Posterior vena cava (tissue), 2 donors: ENCODE measurements at regions of chr17 and their contacts with region 1.

Region 1: DNA sequence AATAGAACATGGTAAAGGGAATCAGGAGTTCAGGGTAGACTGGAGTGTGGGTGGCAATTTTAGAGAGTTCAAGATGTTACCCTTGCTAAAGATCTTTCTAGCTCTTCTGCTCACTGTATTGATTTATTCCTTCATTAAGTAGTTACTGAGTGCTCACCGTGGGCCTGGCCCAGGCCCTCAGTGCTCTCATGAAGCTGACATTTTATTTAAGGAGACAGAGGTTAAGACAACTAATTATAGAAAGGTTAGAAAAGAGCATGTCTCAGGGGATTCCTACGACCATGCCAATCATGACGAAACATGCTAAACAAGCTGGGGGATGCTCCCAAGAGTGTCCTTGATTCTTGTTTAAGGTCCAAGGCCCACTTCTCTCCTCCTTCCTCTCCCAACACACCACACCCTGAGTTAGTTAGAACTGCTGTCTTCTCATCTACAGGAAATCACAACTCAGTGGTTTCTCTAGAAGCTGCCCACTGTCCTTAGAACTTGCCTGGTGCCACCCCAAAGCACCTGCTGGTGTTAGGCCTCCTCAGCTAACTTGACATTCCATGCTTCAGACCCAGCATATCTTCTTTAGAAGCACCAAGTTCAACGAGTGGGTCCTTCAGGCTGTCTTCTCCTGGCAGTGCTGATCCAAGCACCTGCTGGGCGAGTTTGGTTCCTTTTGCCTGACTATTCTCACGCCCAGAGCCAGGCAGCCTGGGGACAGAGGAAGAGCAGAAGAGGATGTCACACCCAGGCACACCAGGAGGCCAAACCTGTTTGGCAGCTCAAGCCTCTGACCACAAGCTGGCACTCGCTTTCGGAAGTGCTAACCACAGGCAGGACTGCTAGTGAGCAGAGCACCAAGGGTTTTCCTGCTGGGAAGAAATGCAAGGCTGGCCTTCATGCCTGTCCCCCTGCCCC is 79.0 kb downstream of the GAS7 start:
- DNase-seq: peak; percentile 82

Region 2: GRCh38 chr17:10059369-10060211 is 59.9 kb before region 1 on chr17:
- intact Hi-C with region 1: no loop called
- DNase-seq: peak; percentile 83

Region 3: GRCh38 chr17:10099051-10099571 is 20.3 kb before region 1 on chr17:
- intact Hi-C with region 1: loop called in 1 of 2 experiments (anchors 1 kb)
- DNase-seq: peak; percentile 85

Region 4: GRCh38 chr17:10984220-10984619 is 864.8 kb after region 1 on chr17:
- intact Hi-C with region 1: no loop called
- DNase-seq: no peak